Breast epithelium (tissue), 4 donors: ENCODE measurements at regions of chr16 and their contacts with region 1.

Region 1: GRCh38 chr16:67384778-67385510 is 8.4 kb downstream of the TPPP3 start:
- DNase-seq: no peak
- H3K4me3 ChIP-seq: no peak overlapping the region
- H3K27ac ChIP-seq: no peak overlapping the region
- H3K4me1 ChIP-seq: no peaks in the 10 kb centered on the region
- H3K27me3 ChIP-seq: no peaks in the 10 kb centered on the region
- CTCF ChIP-seq: no peak
- POLR2A ChIP-seq: no peak

Region 2: DNA sequence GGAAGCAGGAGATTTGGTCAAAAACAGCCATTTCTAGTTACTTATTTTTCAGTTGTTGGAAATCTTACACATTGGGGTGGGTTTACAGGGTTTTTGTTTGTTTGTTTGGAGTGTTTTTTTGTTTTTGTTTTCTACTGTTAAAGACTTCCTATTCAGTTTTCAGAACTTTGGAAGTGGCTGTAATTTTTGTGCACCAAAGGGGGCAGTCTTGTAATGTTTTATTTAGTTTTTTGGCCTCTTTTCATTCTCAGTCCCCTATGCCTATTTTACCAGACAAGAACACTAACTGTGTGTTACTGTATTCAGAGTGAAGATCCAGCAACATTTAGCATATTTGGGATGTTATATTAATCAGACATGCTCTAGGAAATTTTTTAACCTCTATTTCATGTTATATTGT is 12.3 kb before region 1 on chr16:
- intact Hi-C with region 1: loop called (anchors 1 kb)
- DNase-seq: no peak
- H3K4me3 ChIP-seq: no peak overlapping the region
- H3K27ac ChIP-seq: no peak overlapping the region
- H3K4me1 ChIP-seq: no peaks in the 10 kb centered on the region
- H3K27me3 ChIP-seq: no peaks in the 10 kb centered on the region
- CTCF ChIP-seq: peak; percentile 20 to 45 (median 41)
- POLR2A ChIP-seq: no peak

Region 3: GRCh38 chr16:67409644-67410043 is 24.7 kb after region 1 on chr16:
- intact Hi-C with region 1: loop called (anchors 1 kb)
- DNase-seq: no peak
- H3K4me3 ChIP-seq: no peak overlapping the region
- H3K27ac ChIP-seq: no peak overlapping the region
- H3K4me1 ChIP-seq: peaks cover 0 to 10% of the 10 kb centered on the region in 2 donors
- H3K27me3 ChIP-seq: no peaks in the 10 kb centered on the region
- CTCF ChIP-seq: no peak
- POLR2A ChIP-seq: no peak